ENCODE measurements at regions of chr17 and their contacts with region 1.

Region 1: GRCh38 chr17:73513426-73513825 is 130.8 kb downstream of the SDK2 start:
- DNase-seq: no peak
- H3K4me3 ChIP-seq: no peak overlapping the region
- H3K27ac ChIP-seq: no peak overlapping the region
- H3K4me1 ChIP-seq: peaks cover 0 to 15% of the 10 kb centered on the region in 2 experiments; a peak in 2 of 4 replicates
- H3K27me3 ChIP-seq: no peaks in the 10 kb centered on the region
- CTCF ChIP-seq: no peak
- EP300 ChIP-seq: no peak
- RAD21 ChIP-seq: no peak

Region 2: DNA sequence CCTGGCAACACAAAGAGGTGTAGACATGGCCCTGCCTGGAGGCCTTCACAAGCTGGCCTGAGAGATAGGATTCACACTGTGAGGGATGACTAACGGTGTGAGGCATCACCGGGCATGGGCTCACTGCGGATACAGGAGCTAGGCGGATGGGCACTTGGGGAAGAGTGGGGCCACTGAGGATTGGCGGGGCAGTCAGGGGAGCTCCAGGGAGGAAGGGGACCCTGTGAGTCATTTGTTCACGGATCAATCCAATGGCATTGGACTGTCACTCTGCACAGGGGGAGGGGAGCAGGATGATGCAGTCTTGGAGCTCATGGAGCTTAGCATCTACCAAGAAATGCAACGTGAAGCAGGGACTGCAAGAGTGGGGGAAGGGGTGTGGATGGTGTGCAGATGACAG is 13.5 kb after region 1 on chr17:
- CTCF ChIA-PET with region 1: interaction called, 13 read pairs
- POLR2A ChIA-PET with region 1: no interaction called
- DNase-seq: no peak
- H3K4me3 ChIP-seq: no peak overlapping the region
- H3K27ac ChIP-seq: no peak overlapping the region
- H3K4me1 ChIP-seq: peaks cover 0 to 15% of the 10 kb centered on the region in 2 experiments; a peak in 1 of 4 replicates
- H3K27me3 ChIP-seq: no peaks in the 10 kb centered on the region
- CTCF ChIP-seq: no peak
- EP300 ChIP-seq: no peak
- RAD21 ChIP-seq: no peak

Region 3: DNA sequence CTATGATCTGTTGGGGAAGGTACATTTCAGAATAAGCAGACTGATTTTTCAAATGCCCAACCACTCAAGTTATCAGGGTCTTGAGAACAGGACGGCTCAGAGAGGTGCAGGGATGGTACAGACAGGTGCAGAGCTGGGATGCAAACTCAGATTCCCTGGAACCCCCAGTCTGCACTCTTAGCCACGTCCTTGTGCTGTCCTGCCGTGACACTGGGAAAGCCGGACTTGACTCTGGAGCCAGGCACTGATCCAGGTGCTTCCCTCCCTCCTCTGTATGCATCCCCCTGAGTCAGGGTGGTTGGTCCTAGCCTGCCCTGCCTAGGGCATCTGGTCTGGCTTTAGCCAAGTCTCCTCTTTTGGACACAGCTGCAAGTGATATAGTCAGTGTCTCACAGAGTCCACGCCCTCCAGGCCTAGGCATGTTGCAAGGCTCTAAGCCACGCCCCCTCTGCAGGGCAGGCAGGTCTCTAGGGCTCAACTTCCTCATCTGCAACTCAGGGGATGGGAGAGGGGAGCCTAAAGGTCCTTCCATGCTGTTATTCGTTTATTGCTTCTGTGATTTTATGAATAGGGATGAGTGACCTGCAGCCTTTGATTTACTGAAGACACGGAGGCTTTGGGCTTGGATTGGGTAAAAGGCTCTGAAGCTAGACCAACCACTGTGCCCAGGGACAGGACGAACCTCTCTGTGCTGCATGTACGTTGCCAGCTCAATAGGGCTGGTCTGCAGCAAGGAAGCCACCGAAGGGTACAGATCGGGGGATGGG is 33.5 kb after region 1 on chr17:
- CTCF ChIA-PET with region 1: no interaction called
- POLR2A ChIA-PET with region 1: no interaction called
- DNase-seq: peak; percentile 85
- H3K4me3 ChIP-seq: no peak overlapping the region
- H3K27ac ChIP-seq: no peak overlapping the region
- H3K4me1 ChIP-seq: peaks cover 0 to 30% of the 10 kb centered on the region in 2 experiments; a peak in 1 of 4 replicates
- H3K27me3 ChIP-seq: no peaks in the 10 kb centered on the region
- CTCF ChIP-seq: no peak
- EP300 ChIP-seq: 0 out of 4 replicates have a peak, but pooled peaks of 1 of the 2 experiments have one; percentile 36
- RAD21 ChIP-seq: peak; percentile 16; the same call in 1 of the 2 replicates

Measured in SK-N-SH (cell line).